ENCODE measurements at regions of chr9 and their contacts with region 1.

Region 1: DNA sequence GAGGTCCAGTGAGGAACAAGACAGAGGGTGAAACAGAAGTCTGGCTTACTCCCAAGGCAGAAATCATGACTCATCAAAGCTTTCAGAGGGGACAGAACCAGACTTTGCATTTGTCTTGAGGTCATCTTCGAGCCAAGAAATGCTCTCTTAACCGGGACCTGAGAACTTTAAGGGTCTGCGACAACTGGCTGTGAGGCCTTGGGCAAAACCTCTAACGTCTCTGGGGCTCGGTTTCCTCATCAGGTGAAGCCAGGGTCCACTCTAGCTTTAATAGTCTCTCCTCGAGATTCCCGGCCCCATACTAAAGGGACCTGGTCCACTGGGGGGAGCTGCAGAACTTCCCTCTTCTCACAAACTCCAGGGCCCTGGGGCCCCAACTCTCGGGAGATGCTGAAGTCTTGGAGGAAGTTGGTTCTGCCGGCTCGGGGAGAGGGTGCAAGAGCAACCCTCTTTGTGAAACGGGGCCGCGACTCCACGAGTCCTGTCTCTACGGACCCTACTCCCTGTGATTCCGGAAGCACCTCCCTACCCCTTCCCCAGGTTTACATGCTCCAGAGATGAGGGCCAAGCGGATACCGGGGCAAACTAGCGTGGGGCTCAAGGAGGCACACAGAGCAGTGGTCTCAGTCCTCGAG is 2.6 kb downstream of the GLIS3 start:
- DNase-seq: peak; percentile 71
- ATAC-seq: peak; percentile 59

Region 2: GRCh38 chr9:4099976-4100735 is 197.1 kb before region 1 on chr9:
- intact Hi-C with region 1: loop called (anchors 10 kb)
- DNase-seq: no peak
- ATAC-seq: no peak